Activated CD8-positive, alpha-beta memory T cell treated with anti-CD3 and anti-CD28 coated beads, Interleukin-2, amount 10 ng/mL, durations not matched to agents 7 days and 5 days (primary cell): ENCODE measurements at regions of chr1 and their contacts with region 1.

Region 1: DNA sequence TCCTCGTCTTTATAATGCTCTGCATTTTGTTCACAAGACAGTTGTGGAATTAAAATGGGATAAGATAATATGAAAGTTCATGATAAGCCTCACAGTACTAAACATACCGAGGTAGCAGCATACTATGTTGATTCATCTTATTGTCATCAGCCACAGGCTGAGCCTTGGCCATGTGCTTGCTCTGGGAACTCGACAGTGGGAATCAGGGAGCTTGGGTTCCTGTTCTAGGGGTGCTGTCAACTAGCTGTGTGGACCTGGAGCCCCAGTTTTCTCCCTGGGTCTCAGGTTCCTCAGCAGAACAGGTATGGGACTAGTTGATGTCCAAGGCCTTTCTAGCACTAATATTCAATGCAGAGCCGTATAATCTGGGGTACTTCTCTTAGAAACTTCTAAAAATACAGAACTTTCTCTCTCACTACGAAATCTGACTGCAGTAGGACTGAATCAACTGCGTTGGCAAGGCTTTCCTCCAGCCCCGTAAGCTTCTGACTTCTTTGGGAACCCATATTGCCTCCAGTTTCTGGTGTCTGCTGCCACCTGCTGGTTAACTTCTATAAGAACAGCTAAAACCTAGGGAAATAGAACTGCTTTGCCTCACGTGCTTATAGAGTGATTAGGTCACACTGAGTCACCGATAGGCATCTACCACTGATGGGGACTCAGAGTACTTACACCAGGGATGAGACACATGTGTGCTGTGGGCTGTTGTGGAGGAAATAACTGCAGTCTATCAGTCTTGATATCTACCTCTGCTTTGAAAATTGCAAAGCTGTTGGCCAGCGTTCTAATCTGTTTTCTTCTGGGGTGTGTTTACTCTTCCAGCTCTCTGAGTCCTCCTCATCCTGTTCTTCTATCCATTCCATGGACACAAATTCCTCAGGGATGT is 110.9 kb downstream of the RGL1 start:
- DNase-seq: peak; percentile 84
- ATAC-seq: peak; percentile 100
- H3K4me3 Mint-ChIP-seq: no peak overlapping the region
- H3K27ac Mint-ChIP-seq: peak overlapping the region; percentile 42
- H3K4me1 Mint-ChIP-seq: peaks cover 21% of the 10 kb centered on the region
- H3K27me3 Mint-ChIP-seq: peaks cover 3% of the 10 kb centered on the region

Region 2: GRCh38 chr1:183685112-183685713 is 230.7 kb before region 1 on chr1:
- CTCF ChIA-PET with region 1: interaction called, 34 read pairs
- DNase-seq: no peak
- ATAC-seq: no peak
- H3K4me3 Mint-ChIP-seq: no peak overlapping the region
- H3K27ac Mint-ChIP-seq: no peak overlapping the region
- H3K4me1 Mint-ChIP-seq: peaks cover 6% of the 10 kb centered on the region
- H3K27me3 Mint-ChIP-seq: peaks cover 35% of the 10 kb centered on the region

Region 3: DNA sequence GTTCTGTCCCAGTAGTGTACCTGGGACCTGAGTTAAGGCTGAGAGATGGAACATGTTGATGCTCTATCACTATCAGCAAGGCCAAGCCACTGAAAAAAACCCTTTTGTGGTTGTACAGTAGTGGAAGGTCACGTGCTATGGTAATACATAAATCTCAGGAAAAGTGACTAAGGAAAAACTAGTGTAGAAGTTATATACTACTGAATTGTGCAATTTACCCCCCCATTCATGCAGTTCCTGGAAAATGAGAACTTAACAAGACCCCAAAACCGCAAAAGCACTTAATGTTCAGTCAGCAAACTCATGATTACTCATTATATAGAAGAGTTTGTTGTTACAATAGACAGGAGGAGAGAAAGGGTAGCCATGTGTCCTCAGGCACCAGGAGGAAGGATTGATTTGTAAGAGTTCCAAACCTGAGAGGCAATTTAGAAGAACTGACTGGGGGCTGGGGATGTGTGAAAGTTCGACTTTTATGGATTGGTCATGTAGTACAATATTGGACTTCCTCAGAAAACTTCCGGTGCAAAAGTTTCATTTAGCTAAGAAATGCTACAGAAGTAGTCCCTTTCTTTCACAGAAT is 19.3 kb before region 1 on chr1:
- CTCF ChIA-PET with region 1: interaction called, 15 read pairs
- DNase-seq: no peak
- ATAC-seq: peak; percentile 12
- H3K4me3 Mint-ChIP-seq: no peak overlapping the region
- H3K27ac Mint-ChIP-seq: no peak overlapping the region
- H3K4me1 Mint-ChIP-seq: peaks cover 12% of the 10 kb centered on the region
- H3K27me3 Mint-ChIP-seq: no peaks in the 10 kb centered on the region

Region 4: GRCh38 chr1:183982172-183982963 is 66.5 kb after region 1 on chr1:
- CTCF ChIA-PET with region 1: no interaction called
- DNase-seq: no peak
- ATAC-seq: no peak
- H3K4me3 Mint-ChIP-seq: no peak overlapping the region
- H3K27ac Mint-ChIP-seq: no peak overlapping the region
- H3K4me1 Mint-ChIP-seq: no peaks in the 10 kb centered on the region
- H3K27me3 Mint-ChIP-seq: no peaks in the 10 kb centered on the region